OCI-LY7 (cell line): ENCODE measurements at regions of chr6 and their contacts with region 1.

Region 1: DNA sequence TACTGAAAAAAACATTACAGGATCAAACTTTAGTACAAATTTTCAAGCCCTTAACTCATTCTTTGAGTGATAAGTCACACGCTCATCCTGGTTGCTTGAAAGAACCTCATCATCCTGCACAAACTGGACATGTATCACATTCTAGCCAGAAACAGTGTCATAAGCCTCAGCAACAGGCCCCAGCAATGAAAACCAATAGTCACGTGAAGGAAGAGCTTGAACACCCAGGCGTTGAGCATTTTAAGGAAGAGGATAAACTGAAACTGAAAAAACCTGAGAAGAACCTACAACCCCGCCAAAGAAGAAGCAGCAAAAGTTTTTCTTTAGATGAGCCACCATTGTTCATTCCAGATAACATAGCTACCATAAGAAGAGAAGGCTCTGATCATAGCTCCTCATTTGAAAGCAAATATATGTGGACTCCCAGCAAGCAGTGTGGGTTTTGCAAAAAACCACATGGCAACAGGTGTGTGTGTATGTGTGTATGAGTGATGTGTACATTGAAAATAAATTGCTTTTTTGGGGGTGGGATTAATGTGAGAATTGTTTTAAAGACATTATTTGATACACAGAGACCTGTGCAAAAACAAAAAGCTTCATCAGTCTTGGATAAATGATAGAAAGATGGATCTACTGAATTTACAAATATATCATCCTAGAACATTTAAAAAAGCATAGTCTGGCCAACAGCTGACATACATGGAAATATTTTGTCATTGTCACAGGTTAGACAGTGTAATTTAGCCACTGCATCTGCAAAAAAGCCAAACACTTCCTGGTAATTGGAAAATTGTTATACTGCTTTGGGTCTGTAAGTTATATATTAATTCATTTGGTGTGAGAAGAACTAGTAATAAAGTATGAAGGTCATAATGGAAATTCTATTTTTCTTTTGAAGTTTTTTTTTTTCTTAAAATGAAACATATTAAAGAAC is 50.1 kb downstream of the PHF3 start:
- DNase-seq: peak; percentile 67
- H3K4me3 ChIP-seq: peak overlapping the region; percentile 39
- H3K27ac ChIP-seq: peak overlapping the region; percentile 93
- H3K4me1 ChIP-seq: peaks cover 77% of the 10 kb centered on the region
- CTCF ChIP-seq: no peak

Region 2: DNA sequence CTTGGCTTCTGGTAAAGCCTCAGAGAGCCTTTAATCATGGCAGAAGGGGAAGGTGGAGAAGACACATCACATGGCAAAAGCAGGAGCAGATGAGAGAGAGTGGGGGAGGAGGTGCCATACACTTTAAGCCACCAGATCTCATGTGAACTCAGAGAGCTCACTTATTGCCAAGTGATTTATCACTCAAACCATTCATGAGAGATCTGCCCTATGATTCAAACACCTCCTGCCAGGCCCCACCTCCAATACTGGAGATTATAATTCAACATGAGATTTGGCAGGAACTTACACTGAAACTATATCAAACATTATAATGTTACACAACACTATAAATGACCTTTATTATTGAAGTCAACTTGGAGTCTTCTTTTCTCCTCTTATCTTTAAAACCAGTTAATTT is 426.6 kb before region 1 on chr6:
- CTCF ChIA-PET with region 1: no interaction called
- POLR2A ChIA-PET with region 1: no interaction called
- intact Hi-C with region 1: no loop called
- DNase-seq: no peak
- H3K4me3 ChIP-seq: no peak overlapping the region
- H3K27ac ChIP-seq: no peak overlapping the region
- H3K4me1 ChIP-seq: no peaks in the 10 kb centered on the region
- CTCF ChIP-seq: no peak

Region 3: DNA sequence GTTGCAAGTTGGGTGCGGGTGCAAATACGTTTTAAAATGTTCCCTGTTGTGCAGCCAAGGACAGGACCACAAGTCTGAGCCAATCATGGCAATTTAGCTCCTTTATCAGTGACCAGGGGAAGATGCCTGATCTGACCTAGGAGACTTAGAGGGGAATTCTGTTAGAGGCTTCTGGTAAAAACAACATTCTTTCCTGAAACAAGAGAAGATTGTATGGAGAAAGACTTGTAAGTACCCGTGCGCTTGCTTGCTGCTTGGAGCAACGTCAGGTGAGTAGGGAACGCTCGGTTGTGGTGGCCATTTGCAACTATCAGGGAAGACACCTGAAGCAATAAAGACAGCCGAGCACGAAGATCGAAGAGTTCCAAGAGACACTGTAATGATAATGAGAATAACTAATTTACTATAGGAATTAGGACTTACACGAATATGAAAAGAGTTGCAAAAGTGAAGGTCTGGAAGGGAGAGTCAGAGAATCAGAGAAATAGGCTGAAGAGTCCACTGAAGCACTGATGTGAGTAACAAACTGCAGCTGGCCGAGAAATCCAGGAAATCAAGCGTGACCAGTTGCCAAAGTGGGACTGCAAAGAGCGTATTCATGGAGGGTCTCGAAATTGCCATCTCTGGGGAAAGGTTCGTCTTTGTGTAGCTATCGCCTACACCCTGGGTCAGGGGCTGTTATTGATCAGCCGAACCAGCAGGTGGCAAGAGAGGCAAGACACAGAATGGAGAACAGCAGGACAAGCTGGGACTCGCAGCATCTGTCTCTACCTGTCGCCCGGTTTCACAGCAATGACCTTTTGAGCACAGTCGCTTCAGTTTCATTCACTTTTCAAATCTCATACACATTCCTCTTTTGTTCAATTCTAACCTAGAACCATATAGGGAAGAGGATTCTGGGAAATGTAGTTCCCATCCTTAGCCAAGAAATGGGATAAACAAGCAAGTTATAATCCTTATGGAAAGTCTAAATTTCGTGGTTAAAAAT is 87.4 kb before region 1 on chr6:
- CTCF ChIA-PET with region 1: interaction called, 3 read pairs
- POLR2A ChIA-PET with region 1: interaction called, 5 read pairs
- intact Hi-C with region 1: loop called (anchors 5 kb)
- DNase-seq: peak; percentile 88
- H3K4me3 ChIP-seq: peak overlapping the region; percentile 64
- H3K27ac ChIP-seq: peak overlapping the region; percentile 41
- H3K4me1 ChIP-seq: peaks cover 16% of the 10 kb centered on the region
- CTCF ChIP-seq: peak; percentile 95

Region 4: GRCh38 chr6:63643862-63644261 is 41.9 kb before region 1 on chr6:
- CTCF ChIA-PET with region 1: no interaction called
- POLR2A ChIA-PET with region 1: interaction called, 10 read pairs
- intact Hi-C with region 1: no loop called
- DNase-seq: peak; percentile 58
- H3K4me3 ChIP-seq: no peak overlapping the region
- H3K27ac ChIP-seq: no peak overlapping the region
- H3K4me1 ChIP-seq: peaks cover 38% of the 10 kb centered on the region
- CTCF ChIP-seq: no peak

Region 5: GRCh38 chr6:63705707-63706106 is 20.0 kb after region 1 on chr6:
- CTCF ChIA-PET with region 1: no interaction called
- POLR2A ChIA-PET with region 1: interaction called, 16 read pairs
- intact Hi-C with region 1: no loop called
- DNase-seq: no peak
- H3K4me3 ChIP-seq: no peak overlapping the region
- H3K27ac ChIP-seq: no peak overlapping the region
- H3K4me1 ChIP-seq: peaks cover 16% of the 10 kb centered on the region
- CTCF ChIP-seq: no peak

Region 6: GRCh38 chr6:64622944-64623343 is 937.2 kb after region 1 on chr6:
- CTCF ChIA-PET with region 1: no interaction called
- POLR2A ChIA-PET with region 1: no interaction called
- intact Hi-C with region 1: no loop called
- DNase-seq: no peak
- H3K4me3 ChIP-seq: no peak overlapping the region
- H3K27ac ChIP-seq: no peak overlapping the region
- H3K4me1 ChIP-seq: no peaks in the 10 kb centered on the region
- CTCF ChIP-seq: no peak